K562 (cell line): ENCODE measurements at regions of chr1 and their contacts with region 1.

Region 1: GRCh38 chr1:16187748-16188401 is 24.6 kb downstream of the ARHGEF19 start:
- DNase-seq: peak; percentile 88 to 95 (median 92)
- ATAC-seq: peak; percentile 94
- H3K4me3 ChIP-seq: no peak overlapping the region
- H3K27ac ChIP-seq: no peak overlapping the region
- H3K4me1 ChIP-seq: peaks cover 6 to 28% of the 10 kb centered on the region in 2 experiments; a peak in 4 of 5 replicates
- H3K27me3 ChIP-seq: no peaks in the 10 kb centered on the region
- CTCF ChIP-seq: peak; percentile 98 to 99 (median 99)
- EP300 ChIP-seq: no peak
- POLR2A ChIP-seq: no peak
- RAD21 ChIP-seq: peak; percentile 100

Region 2: DNA sequence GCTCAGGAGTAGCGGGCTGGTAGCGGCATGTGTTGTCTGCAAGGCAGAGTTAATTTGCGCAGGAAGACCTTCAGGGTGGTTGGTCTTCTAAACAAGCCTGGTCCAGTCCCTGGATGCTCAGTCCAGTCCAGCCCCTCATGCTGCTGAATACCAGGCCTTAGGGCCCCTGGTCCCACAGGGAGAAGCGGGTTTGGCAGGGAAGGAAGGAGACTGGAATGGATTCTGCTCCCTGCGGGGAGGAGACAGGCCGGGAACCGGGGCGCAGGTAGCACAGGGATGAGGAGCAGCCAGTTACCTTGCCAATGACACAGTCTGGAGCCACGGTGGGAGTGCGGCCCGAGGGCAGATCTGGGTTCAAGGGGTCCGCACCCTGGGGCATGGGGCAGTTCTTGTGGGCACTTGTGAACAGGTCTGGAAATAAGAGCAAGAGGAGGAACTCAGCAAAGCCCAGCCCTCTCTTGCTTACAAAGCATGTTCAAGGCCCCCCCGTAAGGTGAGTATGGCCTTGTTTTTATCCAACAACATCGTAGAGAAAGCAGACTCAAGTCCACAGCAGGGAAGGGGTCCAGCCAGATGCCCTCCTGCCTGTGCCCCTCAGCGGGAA is 124.5 kb before region 1 on chr1:
- CTCF ChIA-PET with region 1: no interaction called
- POLR2A ChIA-PET with region 1: no interaction called
- in situ Hi-C with region 1: no loop called
- intact Hi-C with region 1: no loop called
- DNase-seq: no peak
- ATAC-seq: no peak
- H3K4me3 ChIP-seq: no peak overlapping the region
- H3K27ac ChIP-seq: no peak overlapping the region
- H3K4me1 ChIP-seq: peaks cover 0 to 19% of the 10 kb centered on the region in 2 experiments; a peak in 2 of 5 replicates
- H3K27me3 ChIP-seq: peaks cover 11 to 56% of the 10 kb centered on the region in 2 experiments
- CTCF ChIP-seq: no peak
- EP300 ChIP-seq: no peak
- POLR2A ChIP-seq: no peak
- RAD21 ChIP-seq: no peak

Region 3: GRCh38 chr1:16073490-16074119 is 114.3 kb before region 1 on chr1 and contains the start of gene FAM131C:
- CTCF ChIA-PET with region 1: interaction called, 208 read pairs
- POLR2A ChIA-PET with region 1: interaction called, 3 read pairs
- in situ Hi-C with region 1: no loop called
- intact Hi-C with region 1: loop called (anchors 2 kb)
- DNase-seq: peak in 3 of 4 experiments; percentile 80 to 92 (median 91)
- ATAC-seq: peak; percentile 77
- H3K4me3 ChIP-seq: peak within 1 kb of the TSS; percentile 41
- H3K27ac ChIP-seq: no peak within 1 kb of the TSS
- H3K4me1 ChIP-seq: peaks cover 15 to 32% of the 10 kb centered on the region in 2 experiments; a peak in 4 of 5 replicates
- H3K27me3 ChIP-seq: peaks cover 6 to 21% of the 10 kb centered on the region in 2 experiments
- CTCF ChIP-seq: peak; percentile 14 to 62 (median 53); a peak in 3 of 6 replicates
- EP300 ChIP-seq: no peak
- POLR2A ChIP-seq: peak; percentile 60
- RAD21 ChIP-seq: peak in 1 of 2 experiments; percentile 37; a peak in 2 of 4 replicates
- polyA plus RNA-seq, gene FAM131C: not detected

Region 4: DNA sequence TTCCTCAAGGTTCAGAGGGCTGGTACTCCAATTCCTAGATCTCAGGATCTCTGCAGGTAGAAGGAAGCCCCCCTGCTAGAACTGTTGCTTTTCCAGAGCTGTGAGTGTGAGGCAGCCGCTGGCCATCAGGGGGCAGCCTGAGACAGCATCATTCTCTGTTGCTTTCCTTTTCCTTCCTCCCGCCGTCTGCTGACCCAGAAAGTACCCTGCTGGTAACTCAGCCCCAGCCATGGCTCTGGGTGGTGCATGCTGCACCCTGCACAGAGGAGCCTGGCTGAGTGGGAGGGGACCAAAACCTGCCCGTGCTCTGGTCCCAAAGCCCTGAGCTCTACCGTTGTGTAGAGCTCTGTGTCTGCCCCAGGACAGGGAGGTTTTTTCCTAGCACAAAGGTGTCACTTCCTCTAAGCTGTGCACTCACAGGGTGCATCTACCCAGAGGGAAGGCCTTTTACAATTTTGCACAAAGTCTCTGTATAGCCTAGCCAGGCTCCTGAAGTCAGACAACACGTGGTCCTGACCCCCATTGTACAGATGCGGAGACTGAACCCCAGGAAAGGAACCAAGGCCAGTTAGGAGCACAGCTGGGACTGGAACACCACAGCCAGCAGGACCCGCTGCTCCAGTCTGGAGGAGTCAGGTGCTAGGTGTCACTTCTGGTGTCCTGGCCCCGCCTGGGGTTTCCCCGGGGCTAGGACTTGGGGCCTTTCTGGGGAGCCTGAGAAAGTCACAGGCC is 108.8 kb before region 1 on chr1:
- CTCF ChIA-PET with region 1: interaction called, 208 read pairs
- POLR2A ChIA-PET with region 1: interaction called, 5 read pairs
- in situ Hi-C with region 1: loop called (anchors 5 kb)
- intact Hi-C with region 1: loop called (anchors 1 kb)
- DNase-seq: peak; percentile 71 to 87 (median 76)
- ATAC-seq: peak; percentile 84
- H3K4me3 ChIP-seq: no peak overlapping the region
- H3K27ac ChIP-seq: no peak overlapping the region
- H3K4me1 ChIP-seq: peaks cover 14 to 27% of the 10 kb centered on the region in 2 experiments; a peak in 4 of 5 replicates
- H3K27me3 ChIP-seq: peaks cover 0 to 3% of the 10 kb centered on the region in 2 experiments; a peak in 1 of 5 replicates
- CTCF ChIP-seq: peak; percentile 94 to 97 (median 97)
- EP300 ChIP-seq: no peak
- POLR2A ChIP-seq: no peak
- RAD21 ChIP-seq: peak; percentile 95 to 99